CD4-positive, alpha-beta memory T cell (primary cell): ENCODE measurements at regions of chr12 and their contacts with region 1.

Region 1: DNA sequence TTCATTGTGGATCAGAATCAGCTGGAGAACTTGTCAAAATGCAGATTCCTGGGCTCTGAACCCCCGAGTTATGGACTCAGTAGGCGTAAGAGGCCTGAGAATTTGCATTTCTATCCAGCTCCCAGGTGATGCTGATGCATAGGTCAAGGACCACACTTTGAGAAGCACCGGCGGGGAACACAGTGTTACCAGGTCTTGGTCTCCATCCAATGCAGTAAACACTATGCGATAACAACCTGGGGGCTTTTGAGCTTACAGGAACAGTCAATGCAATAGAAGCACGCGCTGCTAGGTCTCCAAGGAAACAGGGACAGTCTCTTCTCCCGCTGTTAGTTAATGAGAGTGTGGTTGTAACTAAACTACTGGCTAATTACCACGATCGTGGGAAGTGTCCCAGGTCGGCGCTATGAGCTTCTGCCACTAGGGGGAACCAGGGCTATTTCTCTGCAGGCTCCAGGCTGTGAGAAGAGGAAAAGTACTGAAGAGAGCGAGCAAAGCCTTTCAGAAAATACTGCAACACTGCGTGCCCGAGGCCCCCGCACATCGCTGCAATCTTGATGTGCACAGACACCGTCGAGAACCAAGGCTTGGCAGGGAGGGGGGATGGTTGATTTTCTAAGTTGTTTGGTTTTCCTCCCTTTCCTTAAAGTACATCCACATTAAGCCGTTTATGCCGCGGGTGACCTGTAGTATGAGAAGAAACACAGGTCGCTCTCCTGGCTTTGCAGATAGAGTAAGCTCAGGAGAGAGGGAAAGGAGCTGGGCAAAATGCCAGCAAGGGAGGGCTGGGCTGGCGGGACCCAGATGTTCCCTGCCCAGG is 52.0 kb upstream of the KCNA1 start:
- DNase-seq: peak; percentile 56 to 65 (median 62)
- H3K4me3 ChIP-seq: peak overlapping the region in 1 of 2 donors; percentile 3
- H3K4me3 Mint-ChIP-seq: peak overlapping the region; percentile 72 to 86 (median 80)
- H3K27ac ChIP-seq: no peak overlapping the region
- H3K27ac Mint-ChIP-seq: peak overlapping the region in 1 of 7 donors; percentile 36
- H3K4me1 ChIP-seq: peaks cover 10% of the 10 kb centered on the region
- H3K4me1 Mint-ChIP-seq: peaks cover 11 to 22% (median 14%) of the 10 kb centered on the region in 4 donors
- H3K27me3 ChIP-seq: peaks cover 10% of the 10 kb centered on the region
- H3K27me3 Mint-ChIP-seq: peaks cover 9 to 12% of the 10 kb centered on the region in 2 donors

Region 2: GRCh38 chr12:4809013-4809448 is 48.7 kb before region 1 on chr12:
- CTCF ChIA-PET with region 1: interaction called, 16 read pairs
- POLR2A ChIA-PET with region 1: interaction called, 3 read pairs
- intact Hi-C with region 1: no loop called
- DNase-seq: peak in 2 of 5 donors; percentile 13 to 45
- H3K4me3 ChIP-seq: peak overlapping the region in 1 of 2 donors; percentile 29
- H3K4me3 Mint-ChIP-seq: peak overlapping the region; percentile 72 to 90 (median 80)
- H3K27ac ChIP-seq: no peak overlapping the region
- H3K27ac Mint-ChIP-seq: peak overlapping the region in 6 of 7 donors; percentile 2 to 86 (median 36)
- H3K4me1 ChIP-seq: peaks cover 43% of the 10 kb centered on the region
- H3K4me1 Mint-ChIP-seq: peaks cover 35 to 60% (median 50%) of the 10 kb centered on the region in 4 donors
- H3K27me3 ChIP-seq: no peaks in the 10 kb centered on the region
- H3K27me3 Mint-ChIP-seq: peaks cover 5 to 14% of the 10 kb centered on the region in 2 donors

Region 3: GRCh38 chr12:4833524-4833923 is 24.2 kb before region 1 on chr12:
- CTCF ChIA-PET with region 1: interaction called, 93 read pairs
- POLR2A ChIA-PET with region 1: no interaction called
- intact Hi-C with region 1: no loop called
- DNase-seq: no peak
- H3K4me3 ChIP-seq: no peak overlapping the region
- H3K4me3 Mint-ChIP-seq: no peak overlapping the region
- H3K27ac ChIP-seq: no peak overlapping the region
- H3K27ac Mint-ChIP-seq: no peak overlapping the region
- H3K4me1 ChIP-seq: peaks cover 30% of the 10 kb centered on the region
- H3K4me1 Mint-ChIP-seq: peaks cover 23 to 55% (median 30%) of the 10 kb centered on the region in 4 donors
- H3K27me3 ChIP-seq: no peaks in the 10 kb centered on the region
- H3K27me3 Mint-ChIP-seq: peaks cover 0 to 3% of the 10 kb centered on the region in 2 donors

Region 4: GRCh38 chr12:5003020-5003666 is 145.5 kb after region 1 on chr12:
- CTCF ChIA-PET with region 1: interaction called, 8 read pairs
- POLR2A ChIA-PET with region 1: no interaction called
- intact Hi-C with region 1: loop called (anchors 1 kb)
- DNase-seq: peak in 3 of 5 donors; percentile 10 to 29 (median 12)
- H3K4me3 ChIP-seq: no peak overlapping the region
- H3K4me3 Mint-ChIP-seq: no peak overlapping the region
- H3K27ac ChIP-seq: no peak overlapping the region
- H3K27ac Mint-ChIP-seq: no peak overlapping the region
- H3K4me1 ChIP-seq: no peaks in the 10 kb centered on the region
- H3K4me1 Mint-ChIP-seq: no peaks in the 10 kb centered on the region
- H3K27me3 ChIP-seq: no peaks in the 10 kb centered on the region
- H3K27me3 Mint-ChIP-seq: peaks cover 13 to 17% of the 10 kb centered on the region in 2 donors